PC-9 (cell line): ENCODE measurements at regions of chr3 and their contacts with region 1.

Region 1: GRCh38 chr3:179105881-179106280 is 34.3 kb upstream of the ZMAT3 start:
- DNase-seq: no peak
- H3K4me3 ChIP-seq: no peak overlapping the region
- H3K27ac ChIP-seq: no peak overlapping the region
- H3K4me1 ChIP-seq: no peaks in the 10 kb centered on the region
- H3K27me3 ChIP-seq: no peaks in the 10 kb centered on the region
- CTCF ChIP-seq: no peak

Region 2: GRCh38 chr3:179309225-179310078 is 203.6 kb after region 1 on chr3:
- CTCF ChIA-PET with region 1: interaction called, 4 read pairs
- POLR2A ChIA-PET with region 1: no interaction called
- intact Hi-C with region 1: loop called (anchors 2 kb)
- DNase-seq: no peak
- H3K4me3 ChIP-seq: no peak overlapping the region
- H3K27ac ChIP-seq: no peak overlapping the region
- H3K4me1 ChIP-seq: no peaks in the 10 kb centered on the region
- H3K27me3 ChIP-seq: no peaks in the 10 kb centered on the region
- CTCF ChIP-seq: no peak